Caco-2 (cell line): ENCODE measurements at regions of chr7 and their contacts with region 1.

Region 1: DNA sequence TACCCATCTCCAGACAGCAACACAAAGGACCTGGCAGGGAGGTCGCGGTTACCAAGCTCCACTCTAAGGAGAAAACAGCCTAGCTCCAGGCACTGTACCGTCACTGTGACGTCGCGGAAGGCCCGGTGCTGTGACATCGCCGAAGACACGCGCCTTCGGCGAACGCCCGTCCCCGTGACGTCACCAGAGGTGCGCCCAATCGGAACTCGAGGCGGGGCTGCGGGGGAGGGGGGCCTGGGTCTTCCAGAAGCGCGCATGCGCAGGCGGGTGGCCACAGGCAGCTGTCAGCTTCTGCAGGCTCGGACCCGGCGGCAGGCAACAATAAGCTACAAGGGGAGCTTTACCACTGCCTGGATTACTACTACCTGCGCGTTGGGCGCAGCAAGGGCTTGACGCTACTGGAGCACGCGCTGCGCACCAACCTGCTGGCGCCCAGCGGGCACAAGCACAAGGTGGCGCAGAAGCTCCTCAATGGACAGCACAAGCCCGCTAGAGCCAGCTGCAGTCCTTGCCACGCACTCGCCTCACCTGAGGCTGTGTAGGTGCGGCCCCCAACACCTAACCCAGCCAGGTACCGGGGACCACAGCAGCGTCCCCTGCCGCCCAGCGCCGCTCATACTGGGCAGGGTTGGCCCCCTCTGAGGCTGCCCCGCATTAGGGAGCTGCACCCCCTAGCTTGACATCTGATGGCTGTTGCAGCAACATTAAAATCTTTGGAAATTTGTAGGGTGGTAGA is 208.4 kb downstream of the TPST1 start:
- DNase-seq: peak; percentile 99
- H3K4me3 ChIP-seq: peak overlapping the region; percentile 60
- H3K4me3 Mint-ChIP-seq: peak overlapping the region; percentile 84
- H3K27ac Mint-ChIP-seq: peak overlapping the region; percentile 97
- H3K4me1 ChIP-seq: no peaks in the 10 kb centered on the region; the same call in 1 of the 2 replicates
- H3K4me1 Mint-ChIP-seq: no peaks in the 10 kb centered on the region
- H3K27me3 ChIP-seq: no peaks in the 10 kb centered on the region
- H3K27me3 Mint-ChIP-seq: no peaks in the 10 kb centered on the region
- CTCF ChIP-seq: peak; percentile 44 to 73

Region 2: DNA sequence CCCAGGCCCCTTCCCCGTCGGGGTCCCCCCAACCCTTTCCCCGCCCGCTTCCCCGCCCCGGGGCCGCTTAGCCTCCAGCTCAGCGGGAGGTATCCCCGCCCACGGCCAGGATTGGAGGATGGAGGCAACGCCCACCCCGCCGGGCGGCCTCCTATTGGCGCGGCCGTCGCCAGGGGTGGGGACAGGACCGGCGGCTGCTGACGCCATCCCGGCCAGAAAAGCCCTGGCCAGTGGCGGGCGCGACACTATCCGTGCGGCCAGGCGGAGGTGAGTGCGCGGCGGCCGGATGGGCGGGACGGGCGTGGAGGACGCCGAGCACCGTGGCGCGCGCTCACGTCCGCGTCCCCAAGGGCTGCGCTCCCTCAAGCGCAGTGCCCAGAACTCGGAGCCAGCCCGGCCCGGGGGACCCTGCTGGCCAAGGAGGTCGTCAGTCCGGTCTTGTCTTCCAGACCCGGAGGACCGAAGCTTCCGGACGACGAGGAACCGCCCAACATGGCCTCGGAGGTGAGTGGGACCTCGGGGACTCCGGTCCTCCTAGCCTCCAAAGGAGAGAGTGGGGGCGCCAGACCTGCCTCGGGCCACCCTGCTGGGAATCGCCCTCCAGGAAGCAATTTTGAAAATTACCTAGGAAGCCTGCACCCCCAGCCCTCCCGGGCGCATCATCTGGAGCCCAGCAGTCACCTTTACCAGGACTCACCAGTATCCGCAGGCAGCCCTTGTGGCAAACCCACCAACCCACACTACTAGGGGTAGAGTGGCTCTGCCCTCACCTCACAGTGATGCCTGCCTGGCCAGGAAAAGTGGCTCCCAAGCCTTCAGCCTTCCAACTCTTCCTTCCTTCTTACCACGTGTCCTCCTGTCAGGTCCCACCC is 337.7 kb before region 1 on chr7 and contains the start of gene ASL:
- CTCF ChIA-PET with region 1: no interaction called
- POLR2A ChIA-PET with region 1: interaction called, 4 read pairs
- intact Hi-C with region 1: loop called (anchors 1 kb)
- DNase-seq: peak; percentile 94 to 98
- H3K4me3 ChIP-seq: peak within 1 kb of the TSS; percentile 82
- H3K4me3 Mint-ChIP-seq: peak within 1 kb of the TSS; percentile 93
- H3K27ac Mint-ChIP-seq: peak within 1 kb of the TSS; percentile 34
- H3K4me1 ChIP-seq: peaks cover 9% of the 10 kb centered on the region
- H3K4me1 Mint-ChIP-seq: no peaks in the 10 kb centered on the region
- H3K27me3 ChIP-seq: no peaks in the 10 kb centered on the region
- H3K27me3 Mint-ChIP-seq: no peaks in the 10 kb centered on the region
- CTCF ChIP-seq: no peak
- total RNA-seq, gene ASL: 54.9 and 64.0 TPM in 2 replicates

Region 3: DNA sequence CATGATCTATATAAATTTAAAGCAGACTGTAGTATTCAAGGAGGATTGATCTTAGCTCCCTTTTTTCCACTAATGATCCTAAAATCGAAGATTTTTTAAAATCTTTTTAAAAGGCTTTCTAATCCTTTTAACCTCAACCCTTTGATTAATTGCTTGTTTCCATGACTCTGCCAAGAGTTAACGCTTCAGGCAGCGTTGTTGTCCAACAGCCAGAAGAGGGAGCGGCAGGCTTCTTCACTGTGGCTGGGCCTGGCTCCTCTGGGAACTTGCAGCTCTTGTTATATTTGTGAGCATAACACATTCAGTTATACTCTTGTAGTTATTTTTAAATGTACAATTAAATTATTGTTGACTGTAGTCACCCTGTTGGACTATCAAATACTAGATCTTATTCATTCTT is 272.6 kb before region 1 on chr7:
- CTCF ChIA-PET with region 1: interaction called, 17 read pairs
- POLR2A ChIA-PET with region 1: no interaction called
- intact Hi-C with region 1: loop called (anchors 2 kb)
- DNase-seq: peak; percentile 55 to 59
- H3K4me3 ChIP-seq: no peak overlapping the region
- H3K4me3 Mint-ChIP-seq: no peak overlapping the region
- H3K27ac Mint-ChIP-seq: peak overlapping the region; percentile 43
- H3K4me1 ChIP-seq: peaks cover 28% of the 10 kb centered on the region
- H3K4me1 Mint-ChIP-seq: peaks cover 40% of the 10 kb centered on the region
- H3K27me3 ChIP-seq: no peaks in the 10 kb centered on the region
- H3K27me3 Mint-ChIP-seq: no peaks in the 10 kb centered on the region
- CTCF ChIP-seq: peak in 1 of 2 experiments; percentile 80

Region 4: GRCh38 chr7:66211429-66211828 is 202.1 kb before region 1 on chr7:
- CTCF ChIA-PET with region 1: interaction called, 6 read pairs
- POLR2A ChIA-PET with region 1: interaction called, 13 read pairs
- intact Hi-C with region 1: no loop called
- DNase-seq: no peak
- H3K4me3 ChIP-seq: no peak overlapping the region
- H3K4me3 Mint-ChIP-seq: no peak overlapping the region
- H3K27ac Mint-ChIP-seq: no peak overlapping the region
- H3K4me1 ChIP-seq: peaks cover 1% of the 10 kb centered on the region
- H3K4me1 Mint-ChIP-seq: peaks cover 18% of the 10 kb centered on the region
- H3K27me3 ChIP-seq: no peaks in the 10 kb centered on the region
- H3K27me3 Mint-ChIP-seq: no peaks in the 10 kb centered on the region
- CTCF ChIP-seq: no peak

Region 5: DNA sequence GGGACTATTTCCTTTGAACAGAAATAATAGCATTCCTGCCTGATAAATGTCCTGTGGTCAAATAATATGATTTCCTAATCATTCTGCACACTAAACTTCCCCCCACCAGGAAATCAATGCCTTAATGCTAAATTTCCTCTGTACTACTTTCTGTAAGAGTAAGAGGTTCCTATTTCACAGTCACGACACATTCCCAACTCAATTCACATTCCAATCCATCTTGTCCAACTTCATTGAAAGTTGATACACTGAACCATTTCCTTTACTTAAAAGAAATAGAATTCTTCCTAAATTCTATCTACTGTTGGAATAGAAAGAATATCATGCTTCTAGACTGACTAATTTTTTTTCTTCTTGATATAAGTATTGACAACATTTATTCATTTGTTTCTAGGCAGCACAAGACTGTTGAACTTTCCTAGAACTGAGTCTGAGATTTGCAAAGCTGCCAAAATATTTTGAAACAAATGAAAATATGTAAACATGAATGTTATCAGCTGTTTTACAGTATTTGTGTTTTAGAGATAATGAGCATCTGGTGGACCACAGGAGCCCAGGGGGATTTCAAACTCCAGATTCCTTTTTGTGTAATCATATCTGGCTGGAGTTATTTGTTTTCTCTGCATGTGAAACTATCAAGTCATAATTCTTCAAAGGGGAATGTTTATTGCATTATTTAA is 86.9 kb before region 1 on chr7:
- CTCF ChIA-PET with region 1: no interaction called
- POLR2A ChIA-PET with region 1: no interaction called
- intact Hi-C with region 1: loop called (anchors 10 kb)
- DNase-seq: peak; percentile 25 to 45
- H3K4me3 ChIP-seq: no peak overlapping the region
- H3K4me3 Mint-ChIP-seq: peak overlapping the region; percentile 0
- H3K27ac Mint-ChIP-seq: no peak overlapping the region
- H3K4me1 ChIP-seq: peaks cover 14% of the 10 kb centered on the region
- H3K4me1 Mint-ChIP-seq: peaks cover 25% of the 10 kb centered on the region
- H3K27me3 ChIP-seq: no peaks in the 10 kb centered on the region
- H3K27me3 Mint-ChIP-seq: no peaks in the 10 kb centered on the region
- CTCF ChIP-seq: no peak

Region 6: DNA sequence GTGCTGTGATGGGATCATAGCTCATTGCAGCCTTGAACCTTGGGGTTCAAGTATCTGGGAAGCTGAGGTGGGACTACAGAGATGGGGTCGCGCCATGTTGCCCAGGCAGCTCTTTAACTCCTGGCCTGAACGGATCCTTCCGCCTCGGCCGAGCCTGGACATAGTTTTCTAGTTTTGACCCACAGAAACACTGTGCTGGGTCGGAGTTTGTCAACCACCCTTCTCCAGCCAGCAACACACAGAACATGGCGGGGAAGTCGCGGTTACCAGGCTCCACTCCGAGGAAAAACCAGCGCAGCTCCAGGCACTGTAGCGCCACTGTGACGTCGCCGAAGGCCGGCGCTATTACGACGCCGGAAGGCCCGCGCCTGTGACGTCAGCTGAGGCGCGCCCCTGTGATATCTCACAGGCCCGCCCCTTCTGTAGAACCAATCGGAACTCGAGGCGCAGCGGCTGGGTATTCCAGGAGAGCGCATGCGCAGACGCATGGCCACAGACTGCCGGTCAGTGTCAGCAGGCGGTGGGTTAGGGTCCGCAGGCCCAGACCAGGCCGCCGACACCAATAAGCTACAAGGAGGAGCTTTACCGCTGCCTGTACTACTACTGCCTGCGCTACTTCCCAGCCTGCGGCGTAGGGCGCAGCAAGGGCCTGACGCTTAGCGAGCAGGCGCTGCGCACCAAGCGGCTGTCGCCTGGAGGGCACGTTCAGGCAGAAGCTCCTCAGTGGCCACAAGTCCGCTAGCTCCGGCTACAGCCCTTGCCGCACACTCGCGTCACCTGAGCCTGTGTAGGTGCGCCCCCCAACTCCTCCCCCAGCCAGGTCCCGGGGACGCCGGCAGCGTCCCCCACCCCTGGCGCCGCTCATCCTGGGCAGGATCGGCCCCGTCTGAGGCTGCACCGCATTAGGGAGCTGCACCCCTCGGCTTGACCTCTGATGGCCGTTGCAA is 80.0 kb after region 1 on chr7:
- CTCF ChIA-PET with region 1: interaction called, 14 read pairs
- POLR2A ChIA-PET with region 1: interaction called, 33 read pairs
- intact Hi-C with region 1: loop called (anchors 1 kb)
- DNase-seq: peak; percentile 98 to 99
- H3K4me3 ChIP-seq: peak overlapping the region; percentile 61
- H3K4me3 Mint-ChIP-seq: peak overlapping the region; percentile 84
- H3K27ac Mint-ChIP-seq: peak overlapping the region; percentile 98
- H3K4me1 ChIP-seq: 0 out of 2 replicates have a peak, but pooled peaks cover 5% of the 10 kb centered on the region
- H3K4me1 Mint-ChIP-seq: no peaks in the 10 kb centered on the region
- H3K27me3 ChIP-seq: no peaks in the 10 kb centered on the region
- H3K27me3 Mint-ChIP-seq: no peaks in the 10 kb centered on the region
- CTCF ChIP-seq: peak in 1 of 2 experiments; percentile 29

Region 7: DNA sequence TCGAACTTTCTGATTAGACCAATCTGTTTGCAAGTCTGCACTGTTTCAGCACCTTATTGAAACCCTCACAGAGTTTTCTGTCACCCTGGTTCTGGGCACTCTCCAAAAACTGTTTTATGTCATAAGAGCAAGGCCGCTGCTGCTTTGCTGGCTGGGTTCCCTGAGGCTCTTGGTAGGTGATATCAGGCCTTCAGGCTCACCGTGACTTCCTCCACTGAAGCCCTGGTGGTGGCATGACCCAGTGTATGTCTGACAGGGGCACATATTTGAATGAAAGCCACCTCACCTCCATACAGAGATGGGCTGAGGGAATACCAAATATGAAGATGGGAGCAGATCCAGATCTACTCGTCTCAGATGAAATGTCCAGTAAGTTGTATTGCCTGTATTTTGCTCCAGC is 335.3 kb after region 1 on chr7:
- CTCF ChIA-PET with region 1: no interaction called
- POLR2A ChIA-PET with region 1: no interaction called
- intact Hi-C with region 1: no loop called
- DNase-seq: no peak
- H3K4me3 ChIP-seq: no peak overlapping the region
- H3K4me3 Mint-ChIP-seq: no peak overlapping the region
- H3K27ac Mint-ChIP-seq: no peak overlapping the region
- H3K4me1 ChIP-seq: peaks cover 5% of the 10 kb centered on the region; the same call in 1 of the 2 replicates
- H3K4me1 Mint-ChIP-seq: no peaks in the 10 kb centered on the region
- H3K27me3 ChIP-seq: no peaks in the 10 kb centered on the region
- H3K27me3 Mint-ChIP-seq: no peaks in the 10 kb centered on the region
- CTCF ChIP-seq: no peak